ENCODE measurements at regions of chr20 and their contacts with region 1.

Region 1: DNA sequence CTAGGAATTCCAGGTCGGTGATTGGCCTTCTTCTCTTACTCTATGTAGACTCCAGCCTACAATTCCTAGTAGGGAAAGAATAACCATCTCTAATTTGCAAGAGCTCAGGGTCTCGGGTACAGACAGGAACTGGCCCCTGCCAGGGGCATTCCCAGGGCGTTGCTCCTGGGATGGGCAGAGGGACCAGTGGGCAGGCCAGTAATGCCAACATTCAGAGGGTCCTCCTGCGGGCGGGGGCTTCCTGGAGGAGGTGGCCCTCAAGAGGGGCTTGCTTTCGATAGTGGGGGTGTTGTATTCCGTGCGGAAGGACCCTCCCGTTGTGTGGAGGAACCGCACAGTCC is 129.8 kb upstream of the PRND start:
- DNase-seq: no peak

Region 2: DNA sequence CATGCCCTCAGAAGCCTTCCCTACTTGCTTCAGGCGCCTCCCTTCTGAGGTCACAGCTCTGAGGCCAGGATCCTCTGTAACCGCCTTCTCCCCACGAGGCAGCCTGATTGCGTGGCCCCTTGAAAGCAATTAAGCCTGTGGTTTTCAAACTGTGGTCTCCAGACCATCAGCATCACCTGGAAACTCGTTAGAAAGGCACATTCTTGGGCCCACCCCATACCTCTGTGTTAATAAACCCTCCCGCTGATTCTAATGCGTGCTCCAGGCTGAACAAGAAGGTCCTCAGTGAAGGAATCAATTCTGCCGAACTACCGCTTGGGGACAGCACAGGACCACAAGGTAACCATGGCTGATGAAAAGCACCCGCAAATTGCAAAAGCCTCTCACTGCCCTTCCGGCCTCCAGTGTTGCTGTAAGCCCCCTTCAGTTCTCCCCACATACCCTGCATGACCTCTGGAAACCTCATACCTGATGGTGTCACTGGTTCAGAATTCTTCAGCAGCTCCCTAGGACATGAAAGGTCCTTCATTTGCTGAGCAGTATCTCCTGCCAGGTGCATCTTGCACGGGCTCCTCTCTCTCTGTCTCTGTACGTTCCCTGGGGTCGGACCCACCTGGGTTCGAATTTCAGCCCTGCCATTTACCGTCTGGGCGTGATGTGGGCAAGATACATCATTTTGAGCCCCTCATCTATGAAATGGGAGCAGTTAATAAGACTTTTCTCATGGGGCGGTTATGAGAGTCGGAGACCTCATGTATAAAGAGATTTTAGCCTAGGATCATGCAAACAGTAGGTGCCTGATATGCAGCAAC is 483.2 kb before region 1 on chr20:
- intact Hi-C with region 1: loop called (anchors 2 kb)
- DNase-seq: no peak

Region 3: GRCh38 chr20:4457566-4458543 is 134.1 kb before region 1 on chr20:
- intact Hi-C with region 1: no loop called
- DNase-seq: no peak